Calu3 (cell line): ENCODE measurements at regions of chr1 and their contacts with region 1.

Region 1: DNA sequence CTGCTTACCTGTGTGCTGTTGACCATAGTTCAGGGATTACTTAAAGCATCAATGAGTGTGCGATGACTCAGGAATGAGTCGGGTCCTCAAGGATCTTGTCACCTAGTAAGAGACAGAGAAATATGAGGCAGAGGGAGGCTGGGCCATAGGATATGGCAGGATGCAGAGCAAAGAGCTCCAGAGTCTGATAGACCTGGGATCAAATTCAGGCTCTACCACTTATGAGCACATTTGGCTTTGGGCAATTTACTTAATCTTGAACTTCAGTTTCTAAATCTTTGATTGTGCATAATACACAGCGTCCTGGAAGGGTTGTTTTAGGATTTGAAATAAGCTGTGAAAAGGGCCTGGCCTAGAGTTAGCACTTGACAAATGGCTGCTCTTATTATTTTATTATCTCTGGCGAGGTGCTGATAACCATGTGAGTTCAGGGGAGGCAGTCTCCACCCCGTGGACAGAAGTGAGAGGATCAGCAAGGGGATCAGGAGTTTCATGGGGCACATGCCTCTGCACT is 94.5 kb downstream of the ROR1 start:
- DNase-seq: no peak
- H3K4me3 Mint-ChIP-seq: no peak overlapping the region
- H3K27ac Mint-ChIP-seq: peak overlapping the region; percentile 55
- H3K4me1 Mint-ChIP-seq: peaks cover 66% of the 10 kb centered on the region
- H3K27me3 Mint-ChIP-seq: no peaks in the 10 kb centered on the region
- CTCF ChIP-seq: no peak

Region 2: GRCh38 chr1:63886340-63886739 is 18.0 kb after region 1 on chr1:
- CTCF ChIA-PET with region 1: interaction called, 10 read pairs
- intact Hi-C with region 1: no loop called
- DNase-seq: no peak
- H3K4me3 Mint-ChIP-seq: no peak overlapping the region
- H3K27ac Mint-ChIP-seq: no peak overlapping the region
- H3K4me1 Mint-ChIP-seq: peaks cover 48% of the 10 kb centered on the region
- H3K27me3 Mint-ChIP-seq: no peaks in the 10 kb centered on the region
- CTCF ChIP-seq: no peak